HEK293 (cell line): ENCODE measurements at regions of chr18 and their contacts with region 1.

Region 1: GRCh38 chr18:49612515-49613033 is 50.7 kb downstream of the LIPG start:
- H3K4me3 ChIP-seq: no peak overlapping the region
- H3K27ac ChIP-seq: no peak overlapping the region
- H3K4me1 ChIP-seq: peaks cover 18% of the 10 kb centered on the region
- CTCF ChIP-seq: no peak

Region 2: GRCh38 chr18:49274188-49274714 is 338.3 kb before region 1 on chr18:
- CTCF ChIA-PET with region 1: no interaction called
- POLR2A ChIA-PET with region 1: no interaction called
- H3K4me3 ChIP-seq: no peak overlapping the region
- H3K27ac ChIP-seq: no peak overlapping the region
- H3K4me1 ChIP-seq: 0 out of 2 replicates have a peak, but pooled peaks cover 3% of the 10 kb centered on the region
- CTCF ChIP-seq: no peak

Region 3: GRCh38 chr18:49628881-49629795 is 16.6 kb after region 1 on chr18:
- CTCF ChIA-PET with region 1: interaction called, 12 read pairs
- POLR2A ChIA-PET with region 1: no interaction called
- H3K4me3 ChIP-seq: no peak overlapping the region
- H3K27ac ChIP-seq: no peak overlapping the region
- H3K4me1 ChIP-seq: no peaks in the 10 kb centered on the region
- CTCF ChIP-seq: 0 out of 2 replicates have a peak, but pooled peaks have one; percentile 16

Region 4: DNA sequence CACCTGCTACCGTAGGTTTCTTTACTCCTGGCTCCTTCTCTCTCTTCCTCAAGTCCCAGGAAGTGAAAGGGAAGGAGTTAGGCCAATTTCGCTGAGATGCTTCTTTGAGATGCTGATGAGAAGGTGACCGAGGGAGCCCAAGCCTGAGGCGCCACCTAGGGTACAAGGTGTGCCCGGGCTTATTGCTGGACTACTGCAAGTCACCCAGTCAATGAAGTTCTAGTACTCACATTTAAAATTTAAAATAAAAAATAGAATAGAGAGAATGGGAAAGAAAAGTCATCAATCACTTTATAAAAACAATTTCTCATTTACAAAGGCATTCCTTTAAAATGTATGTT is 155.4 kb after region 1 on chr18:
- CTCF ChIA-PET with region 1: no interaction called
- POLR2A ChIA-PET with region 1: no interaction called
- H3K4me3 ChIP-seq: no peak overlapping the region
- H3K27ac ChIP-seq: no peak overlapping the region
- H3K4me1 ChIP-seq: no peaks in the 10 kb centered on the region
- CTCF ChIP-seq: peak; percentile 58